CD8-positive, alpha-beta T cell (primary cell): ENCODE measurements at regions of chr3 and their contacts with region 1.

Region 1: GRCh38 chr3:185942907-185943759 is 5.3 kb upstream of the TRA2B start:
- DNase-seq: peak; percentile 70 to 90 (median 85)
- ATAC-seq: peak; percentile 100
- H3K4me3 ChIP-seq: no peak overlapping the region
- H3K4me3 Mint-ChIP-seq: peak overlapping the region; percentile 61
- H3K27ac ChIP-seq: no peak overlapping the region
- H3K27ac Mint-ChIP-seq: peak overlapping the region; percentile 72
- H3K4me1 ChIP-seq: peaks cover 8% of the 10 kb centered on the region
- H3K4me1 Mint-ChIP-seq: peaks cover 15% of the 10 kb centered on the region
- H3K27me3 ChIP-seq: peaks cover 0 to 2% of the 10 kb centered on the region in 2 experiments
- H3K27me3 Mint-ChIP-seq: peaks cover 2% of the 10 kb centered on the region
- CTCF ChIP-seq: peak; percentile 98

Region 2: DNA sequence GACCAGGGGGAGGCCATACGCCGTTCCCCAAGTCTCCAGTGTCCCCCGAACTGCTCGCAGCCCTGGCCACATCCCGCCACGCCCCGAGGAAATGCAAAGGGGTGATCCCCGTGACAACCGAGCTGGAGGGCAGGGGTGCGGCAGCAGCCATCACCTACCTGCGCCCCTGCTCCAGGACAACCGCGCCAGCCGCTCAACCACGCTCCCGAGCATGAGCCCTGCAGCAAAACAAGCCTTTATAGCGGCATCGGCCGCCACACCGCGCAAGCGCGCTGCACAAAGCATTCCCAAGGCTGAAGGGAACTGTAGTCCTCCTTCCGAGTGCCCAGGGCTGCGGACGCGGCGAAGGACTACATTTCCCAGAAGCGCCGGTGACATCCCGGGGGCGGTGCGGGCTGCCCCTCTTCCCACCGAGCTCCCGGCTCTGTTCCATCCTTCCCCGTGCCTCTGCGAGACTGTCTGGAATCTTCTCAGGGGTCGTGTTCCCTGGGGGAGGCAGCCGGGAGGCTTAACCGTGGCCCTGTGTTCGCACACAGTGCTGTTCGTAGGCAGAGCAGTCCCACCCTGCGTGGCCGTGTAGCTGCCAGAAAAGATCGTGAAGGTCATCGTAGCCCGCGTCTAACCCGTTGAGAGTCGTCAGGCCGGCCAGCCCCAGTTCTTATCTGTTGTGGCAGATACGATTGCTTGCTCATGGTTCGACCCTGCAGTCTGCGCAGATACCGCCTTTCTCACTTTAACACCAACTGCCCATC is 1925.3 kb before region 1 on chr3 and contains the start of gene ABCC5:
- CTCF ChIA-PET with region 1: no interaction called
- POLR2A ChIA-PET with region 1: no interaction called
- intact Hi-C with region 1: loop called in 1 of 2 experiments (anchors 10 kb)
- DNase-seq: peak; percentile 60 to 91 (median 80)
- ATAC-seq: peak; percentile 94
- H3K4me3 ChIP-seq: peak within 1 kb of the TSS; percentile 94 to 98
- H3K4me3 Mint-ChIP-seq: peak within 1 kb of the TSS; percentile 99
- H3K27ac ChIP-seq: peak within 1 kb of the TSS; percentile 51 to 56
- H3K27ac Mint-ChIP-seq: peak within 1 kb of the TSS; percentile 83
- H3K4me1 ChIP-seq: peaks cover 11% of the 10 kb centered on the region
- H3K4me1 Mint-ChIP-seq: peaks cover 32% of the 10 kb centered on the region
- H3K27me3 ChIP-seq: no peaks in the 10 kb centered on the region
- H3K27me3 Mint-ChIP-seq: peaks cover 12% of the 10 kb centered on the region
- CTCF ChIP-seq: peak; percentile 76
- total RNA-seq, gene ABCC5: 7.4 to 8.3 TPM

Region 3: DNA sequence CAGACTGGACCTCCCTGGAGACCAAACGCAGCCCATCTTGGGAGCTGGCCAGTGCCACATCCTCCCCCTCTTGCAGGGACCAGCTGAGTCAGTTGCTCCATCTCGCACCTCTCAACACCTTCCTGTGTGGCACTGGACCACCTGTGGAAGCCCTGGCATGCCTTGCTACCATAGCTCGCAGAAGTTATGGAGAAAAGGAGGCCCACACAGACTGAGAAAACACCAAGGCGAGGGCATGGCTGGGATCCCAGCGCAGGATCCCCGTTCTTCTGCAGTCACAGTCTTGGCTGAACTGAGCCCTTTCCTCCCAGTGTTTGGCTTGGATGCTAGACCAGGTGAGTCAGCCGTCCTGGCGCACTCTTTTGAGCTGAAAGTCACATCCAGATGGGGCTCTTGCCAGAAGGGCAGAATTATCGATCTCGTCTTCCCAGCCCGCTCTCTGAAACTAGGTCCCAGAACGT is 1516.4 kb before region 1 on chr3:
- CTCF ChIA-PET with region 1: no interaction called
- POLR2A ChIA-PET with region 1: no interaction called
- intact Hi-C with region 1: no loop called
- DNase-seq: no peak
- ATAC-seq: no peak
- H3K4me3 ChIP-seq: no peak overlapping the region
- H3K4me3 Mint-ChIP-seq: no peak overlapping the region
- H3K27ac ChIP-seq: no peak overlapping the region
- H3K27ac Mint-ChIP-seq: no peak overlapping the region
- H3K4me1 ChIP-seq: no peaks in the 10 kb centered on the region
- H3K4me1 Mint-ChIP-seq: no peaks in the 10 kb centered on the region
- H3K27me3 ChIP-seq: no peaks in the 10 kb centered on the region
- H3K27me3 Mint-ChIP-seq: peaks cover 17% of the 10 kb centered on the region
- CTCF ChIP-seq: no peak

Region 4: DNA sequence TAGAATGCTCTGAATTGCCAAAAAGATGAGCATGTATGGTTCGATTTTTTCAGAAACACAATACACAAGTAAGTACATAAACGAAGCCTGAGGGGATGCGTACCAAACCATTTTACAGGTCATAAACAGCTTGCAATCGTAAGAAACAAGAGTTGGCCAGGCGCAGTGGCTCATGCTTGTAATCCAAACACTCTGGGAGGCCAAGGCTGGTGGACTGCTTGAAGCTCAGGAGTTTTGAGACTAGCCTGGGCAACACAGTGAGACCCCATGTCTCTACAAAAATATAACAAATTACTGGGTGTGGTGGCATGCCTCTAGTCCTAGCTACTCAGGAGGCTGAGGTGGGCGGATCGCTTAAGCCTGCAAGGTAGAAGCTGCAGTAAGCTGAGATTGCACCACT is 18.8 kb before region 1 on chr3:
- CTCF ChIA-PET with region 1: interaction called, 20 read pairs
- POLR2A ChIA-PET with region 1: interaction called, 85 read pairs
- intact Hi-C with region 1: no loop called
- DNase-seq: peak in 1 of 9 experiments; percentile 8
- ATAC-seq: no peak
- H3K4me3 ChIP-seq: no peak overlapping the region
- H3K4me3 Mint-ChIP-seq: no peak overlapping the region
- H3K27ac ChIP-seq: no peak overlapping the region
- H3K27ac Mint-ChIP-seq: no peak overlapping the region
- H3K4me1 ChIP-seq: peaks cover 36% of the 10 kb centered on the region
- H3K4me1 Mint-ChIP-seq: peaks cover 63% of the 10 kb centered on the region
- H3K27me3 ChIP-seq: no peaks in the 10 kb centered on the region
- H3K27me3 Mint-ChIP-seq: no peaks in the 10 kb centered on the region
- CTCF ChIP-seq: no peak

Region 5: DNA sequence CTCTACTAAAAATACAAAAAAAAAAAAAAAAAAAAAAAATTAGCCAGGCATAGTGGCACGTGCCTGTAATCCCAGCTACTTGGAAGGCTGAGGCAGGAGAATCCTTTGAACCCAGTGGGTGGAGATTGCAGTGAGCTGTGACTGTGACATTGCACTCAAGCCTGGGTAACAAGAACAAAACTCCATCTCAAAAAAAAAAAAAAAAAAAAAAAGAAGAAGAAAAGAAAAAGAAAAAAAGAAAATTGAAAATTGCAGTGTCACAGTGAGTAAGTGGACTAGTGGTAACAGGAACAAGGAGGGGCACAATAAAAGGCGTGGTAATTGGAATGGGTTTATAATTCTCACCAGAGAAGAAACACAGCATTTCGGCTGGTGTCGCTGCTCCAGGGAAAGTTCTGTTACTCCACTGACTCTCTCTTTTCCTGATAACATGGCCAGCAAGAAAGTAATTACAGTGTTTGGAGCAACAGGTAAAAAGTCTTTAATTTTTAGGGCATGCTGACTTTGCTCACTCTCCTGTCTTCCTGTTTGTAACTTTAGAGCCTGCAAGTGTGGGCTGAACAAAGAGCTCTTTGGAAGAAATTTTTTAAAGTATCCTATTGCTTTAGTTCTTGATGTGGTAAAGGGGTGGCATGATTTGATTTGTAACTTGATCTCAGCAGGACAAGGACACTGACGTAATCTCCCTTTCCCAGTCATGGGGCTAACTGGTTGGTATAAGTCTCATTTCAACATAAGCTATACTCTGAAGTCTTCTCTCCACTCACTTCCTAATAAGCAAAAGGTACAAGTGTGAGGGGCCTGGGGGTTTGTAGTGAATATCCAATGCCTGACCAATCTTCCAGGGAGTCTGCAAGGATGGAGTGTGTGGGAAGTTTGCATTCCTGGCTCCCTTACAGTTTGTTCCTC is 16.7 kb after region 1 on chr3:
- CTCF ChIA-PET with region 1: interaction called, 67 read pairs
- POLR2A ChIA-PET with region 1: interaction called, 3 read pairs
- intact Hi-C with region 1: no loop called
- DNase-seq: peak in 1 of 9 experiments; percentile 32
- ATAC-seq: peak; percentile 42
- H3K4me3 ChIP-seq: no peak overlapping the region
- H3K4me3 Mint-ChIP-seq: peak overlapping the region; percentile 42
- H3K27ac ChIP-seq: no peak overlapping the region
- H3K27ac Mint-ChIP-seq: no peak overlapping the region
- H3K4me1 ChIP-seq: peaks cover 12% of the 10 kb centered on the region
- H3K4me1 Mint-ChIP-seq: no peaks in the 10 kb centered on the region
- H3K27me3 ChIP-seq: no peaks in the 10 kb centered on the region
- H3K27me3 Mint-ChIP-seq: peaks cover 9% of the 10 kb centered on the region
- CTCF ChIP-seq: no peak

Region 6: GRCh38 chr3:185976977-185977678 is 34.0 kb after region 1 on chr3:
- CTCF ChIA-PET with region 1: interaction called, 26 read pairs
- POLR2A ChIA-PET with region 1: no interaction called
- intact Hi-C with region 1: no loop called
- DNase-seq: peak; percentile 50 to 87 (median 79)
- ATAC-seq: peak; percentile 83
- H3K4me3 ChIP-seq: no peak overlapping the region
- H3K4me3 Mint-ChIP-seq: no peak overlapping the region
- H3K27ac ChIP-seq: no peak overlapping the region
- H3K27ac Mint-ChIP-seq: no peak overlapping the region
- H3K4me1 ChIP-seq: peaks cover 3% of the 10 kb centered on the region
- H3K4me1 Mint-ChIP-seq: peaks cover 7% of the 10 kb centered on the region
- H3K27me3 ChIP-seq: no peaks in the 10 kb centered on the region
- H3K27me3 Mint-ChIP-seq: no peaks in the 10 kb centered on the region
- CTCF ChIP-seq: peak; percentile 84

Region 7: GRCh38 chr3:186540221-186540834 is 597.2 kb after region 1 on chr3:
- CTCF ChIA-PET with region 1: interaction called, 27 read pairs
- POLR2A ChIA-PET with region 1: no interaction called
- intact Hi-C with region 1: no loop called
- DNase-seq: peak; percentile 63 to 90 (median 83)
- ATAC-seq: peak; percentile 96
- H3K4me3 ChIP-seq: no peak overlapping the region
- H3K4me3 Mint-ChIP-seq: no peak overlapping the region
- H3K27ac ChIP-seq: no peak overlapping the region
- H3K27ac Mint-ChIP-seq: peak overlapping the region; percentile 7
- H3K4me1 ChIP-seq: peaks cover 6% of the 10 kb centered on the region
- H3K4me1 Mint-ChIP-seq: peaks cover 11% of the 10 kb centered on the region
- H3K27me3 ChIP-seq: no peaks in the 10 kb centered on the region
- H3K27me3 Mint-ChIP-seq: no peaks in the 10 kb centered on the region
- CTCF ChIP-seq: peak; percentile 80

Region 8: DNA sequence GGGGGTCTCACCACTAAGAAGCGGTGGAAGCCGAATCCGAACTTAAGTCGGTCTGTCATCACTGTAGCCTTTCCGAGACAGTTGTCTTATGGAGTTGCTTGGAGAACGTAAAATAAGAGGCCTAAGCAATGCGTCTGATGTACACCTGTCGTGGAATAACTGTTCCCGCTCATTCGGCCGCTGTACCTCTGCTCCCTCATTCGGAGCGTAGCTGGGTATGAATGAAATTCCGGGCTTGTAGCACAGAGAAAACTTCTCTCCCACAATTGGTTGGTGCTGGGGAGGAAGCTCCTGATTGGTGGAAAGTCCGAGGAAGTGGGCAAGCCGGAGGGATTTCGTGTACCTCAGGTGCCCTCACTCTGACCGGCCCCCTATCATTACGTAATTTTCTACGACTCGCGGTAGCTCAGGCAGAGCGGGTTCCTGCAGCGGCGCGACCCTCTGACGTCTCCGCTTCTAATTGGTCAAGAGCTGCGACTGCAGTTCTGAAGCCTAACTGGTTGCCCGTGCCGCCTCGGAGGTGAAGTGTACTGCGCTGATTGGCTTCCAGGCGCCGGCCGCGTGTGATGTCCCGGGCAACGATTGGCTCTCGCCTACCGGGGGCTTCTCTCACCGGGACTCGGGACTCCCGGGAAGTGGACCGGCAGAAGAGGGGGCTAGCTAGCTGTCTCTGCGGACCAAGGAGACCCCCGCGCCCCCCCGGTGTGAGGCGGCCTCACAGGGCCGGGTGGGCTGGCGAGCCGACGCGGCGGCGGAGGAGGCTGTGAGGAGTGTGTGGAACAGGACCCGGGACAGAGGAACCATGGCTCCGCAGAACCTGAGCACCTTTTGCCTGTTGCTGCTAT is 627.2 kb after region 1 on chr3 and contains the start of gene DNAJB11:
- CTCF ChIA-PET with region 1: interaction called, 4 read pairs
- POLR2A ChIA-PET with region 1: interaction called, 27 read pairs
- intact Hi-C with region 1: loop called (anchors 1 to 2 kb)
- DNase-seq: peak; percentile 94 to 100 (median 97)
- ATAC-seq: peak; percentile 82
- H3K4me3 ChIP-seq: peak within 1 kb of the TSS; percentile 73 to 96
- H3K4me3 Mint-ChIP-seq: peak within 1 kb of the TSS; percentile 94
- H3K27ac ChIP-seq: peak within 1 kb of the TSS; percentile 94 to 97
- H3K27ac Mint-ChIP-seq: peak within 1 kb of the TSS; percentile 98
- H3K4me1 ChIP-seq: peaks cover 30% of the 10 kb centered on the region
- H3K4me1 Mint-ChIP-seq: peaks cover 59% of the 10 kb centered on the region
- H3K27me3 ChIP-seq: no peaks in the 10 kb centered on the region
- H3K27me3 Mint-ChIP-seq: no peaks in the 10 kb centered on the region
- CTCF ChIP-seq: no peak
- total RNA-seq, gene DNAJB11: 70.2 to 73.4 TPM

Region 9: GRCh38 chr3:186622651-186623310 is 679.6 kb after region 1 on chr3:
- CTCF ChIA-PET with region 1: no interaction called
- POLR2A ChIA-PET with region 1: no interaction called
- intact Hi-C with region 1: no loop called
- DNase-seq: no peak
- ATAC-seq: no peak
- H3K4me3 ChIP-seq: no peak overlapping the region
- H3K4me3 Mint-ChIP-seq: no peak overlapping the region
- H3K27ac ChIP-seq: no peak overlapping the region
- H3K27ac Mint-ChIP-seq: no peak overlapping the region
- H3K4me1 ChIP-seq: no peaks in the 10 kb centered on the region
- H3K4me1 Mint-ChIP-seq: no peaks in the 10 kb centered on the region
- H3K27me3 ChIP-seq: peaks cover 0 to 8% of the 10 kb centered on the region in 2 experiments
- H3K27me3 Mint-ChIP-seq: peaks cover 31% of the 10 kb centered on the region
- CTCF ChIP-seq: no peak